ENCODE measurements at regions of chr1 and their contacts with region 1.

Region 1: GRCh38 chr1:248837794-248838356 is at the start of gene ZNF672:
- DNase-seq: peak; percentile 96
- H3K4me3 ChIP-seq: peak within 1 kb of the TSS; percentile 86
- H3K27ac ChIP-seq: peak within 1 kb of the TSS; percentile 74
- H3K4me1 ChIP-seq: peaks cover 24% of the 10 kb centered on the region
- CTCF ChIP-seq: no peak
- total RNA-seq, gene ZNF672: 45.7 and 56.1 TPM in 2 replicates

Region 2: GRCh38 chr1:248114890-248115289 is 723.0 kb before region 1 on chr1:
- CTCF ChIA-PET with region 1: no interaction called
- POLR2A ChIA-PET with region 1: no interaction called
- intact Hi-C with region 1: no loop called
- DNase-seq: no peak
- H3K4me3 ChIP-seq: no peak overlapping the region
- H3K27ac ChIP-seq: no peak overlapping the region
- H3K4me1 ChIP-seq: no peaks in the 10 kb centered on the region
- CTCF ChIP-seq: no peak

Region 3: GRCh38 chr1:248622570-248623001 is 215.3 kb before region 1 on chr1:
- CTCF ChIA-PET with region 1: no interaction called
- POLR2A ChIA-PET with region 1: no interaction called
- intact Hi-C with region 1: loop called (anchors 1 kb)
- DNase-seq: peak; percentile 62
- H3K4me3 ChIP-seq: no peak overlapping the region
- H3K27ac ChIP-seq: no peak overlapping the region
- H3K4me1 ChIP-seq: no peaks in the 10 kb centered on the region
- CTCF ChIP-seq: peak; percentile 83

Region 4: GRCh38 chr1:248739572-248740205 is 98.2 kb before region 1 on chr1:
- CTCF ChIA-PET with region 1: no interaction called
- POLR2A ChIA-PET with region 1: no interaction called
- intact Hi-C with region 1: no loop called
- DNase-seq: peak; percentile 29
- H3K4me3 ChIP-seq: no peak overlapping the region
- H3K27ac ChIP-seq: no peak overlapping the region
- H3K4me1 ChIP-seq: no peaks in the 10 kb centered on the region
- CTCF ChIP-seq: no peak

Region 5: DNA sequence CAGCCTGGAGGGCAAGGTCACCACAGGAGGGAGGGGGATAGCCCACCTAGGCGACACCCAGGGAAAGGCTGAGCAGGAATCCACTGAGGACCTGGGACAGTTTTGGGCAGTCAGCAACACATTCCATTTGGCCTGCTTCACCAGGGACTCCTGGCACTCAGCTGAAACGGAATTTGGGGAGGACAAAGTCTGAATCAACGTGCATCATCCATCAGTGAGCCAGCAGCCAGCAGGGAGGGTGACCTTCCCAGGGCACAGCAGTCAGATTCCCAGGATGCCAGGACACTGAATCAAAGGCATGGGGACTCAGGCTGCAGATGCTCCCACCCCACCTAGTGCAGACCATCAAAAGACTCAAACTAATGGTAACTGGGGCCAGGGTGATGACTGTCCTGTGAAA is 16.8 kb before region 1 on chr1:
- CTCF ChIA-PET with region 1: interaction called, 11 read pairs
- POLR2A ChIA-PET with region 1: interaction called, 70 read pairs
- intact Hi-C with region 1: loop called (anchors 1 kb)
- DNase-seq: no peak
- H3K4me3 ChIP-seq: no peak overlapping the region
- H3K27ac ChIP-seq: no peak overlapping the region
- H3K4me1 ChIP-seq: peaks cover 43% of the 10 kb centered on the region
- CTCF ChIP-seq: no peak

Region 6: GRCh38 chr1:248825909-248826760 is 11.7 kb before region 1 on chr1 and contains the start of gene SH3BP5L:
- CTCF ChIA-PET with region 1: interaction called, 11 read pairs
- POLR2A ChIA-PET with region 1: interaction called, 70 read pairs
- intact Hi-C with region 1: loop called (anchors 1 kb)
- DNase-seq: peak; percentile 95
- H3K4me3 ChIP-seq: peak within 1 kb of the TSS; percentile 73
- H3K27ac ChIP-seq: peak within 1 kb of the TSS; percentile 78
- H3K4me1 ChIP-seq: peaks cover 40% of the 10 kb centered on the region
- CTCF ChIP-seq: peak; percentile 95
- total RNA-seq, gene SH3BP5L: 14.5 and 16.9 TPM in 2 replicates

Region 7: GRCh38 chr1:248858891-248859889 is 21.3 kb after region 1 on chr1 and contains the start of gene ZNF692:
- CTCF ChIA-PET with region 1: interaction called, 8 read pairs
- POLR2A ChIA-PET with region 1: interaction called, 24 read pairs
- intact Hi-C with region 1: loop called (anchors 1 kb)
- DNase-seq: peak; percentile 99
- H3K4me3 ChIP-seq: peak within 1 kb of the TSS; percentile 79
- H3K27ac ChIP-seq: peak within 1 kb of the TSS; percentile 72
- H3K4me1 ChIP-seq: peaks cover 39% of the 10 kb centered on the region
- CTCF ChIP-seq: no peak
- total RNA-seq, gene ZNF692: 49.7 and 65.0 TPM in 2 replicates

Region 8: GRCh38 chr1:248873409-248873992 is 35.6 kb after region 1 on chr1:
- CTCF ChIA-PET with region 1: no interaction called
- POLR2A ChIA-PET with region 1: interaction called, 8 read pairs
- intact Hi-C with region 1: loop called (anchors 1 kb)
- DNase-seq: peak; percentile 95
- H3K4me3 ChIP-seq: peak overlapping the region; percentile 81
- H3K27ac ChIP-seq: peak overlapping the region; percentile 83
- H3K4me1 ChIP-seq: peaks cover 12% of the 10 kb centered on the region
- CTCF ChIP-seq: no peak

Region 9: DNA sequence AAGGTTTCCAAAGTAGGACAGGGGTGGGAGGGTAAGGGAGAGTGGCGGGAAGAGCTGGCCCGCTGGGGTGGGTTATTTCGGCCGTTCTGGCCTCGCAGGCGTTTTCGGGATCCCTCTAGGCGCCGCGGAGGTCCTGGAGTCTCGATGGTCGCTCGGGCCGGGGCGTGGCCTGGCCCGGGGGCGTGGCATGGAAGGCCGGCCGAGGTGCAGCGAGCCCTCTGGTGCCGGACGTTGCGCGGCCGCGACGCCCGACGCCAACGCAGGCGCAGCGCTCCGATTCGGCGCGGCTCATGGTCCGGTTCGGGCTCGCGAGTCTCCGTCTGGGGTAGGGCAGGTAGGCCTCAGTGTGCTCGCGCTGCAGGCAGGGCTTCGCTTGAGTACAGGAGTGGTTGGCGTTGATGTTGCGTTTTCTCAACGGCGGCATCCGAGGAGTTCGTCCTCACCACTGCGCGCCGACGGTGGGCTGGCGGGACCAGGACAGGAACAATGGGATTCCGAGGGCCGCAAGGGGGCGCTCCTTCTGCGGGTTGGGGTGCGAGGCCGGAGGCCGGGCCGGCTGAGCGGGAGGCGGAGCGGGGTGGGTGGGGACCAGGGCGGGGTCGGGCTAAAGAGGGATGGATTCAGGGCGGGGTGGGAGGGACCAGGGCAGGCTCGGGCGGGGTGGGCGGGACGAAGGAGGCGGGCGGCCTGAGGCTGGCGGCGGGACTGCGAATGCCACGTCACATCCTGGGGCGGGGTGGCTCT is 68.3 kb after region 1 on chr1 and contains the start of gene PGBD2:
- CTCF ChIA-PET with region 1: no interaction called
- POLR2A ChIA-PET with region 1: interaction called, 11 read pairs
- intact Hi-C with region 1: loop called (anchors 1 kb)
- DNase-seq: peak; percentile 95
- H3K4me3 ChIP-seq: peak within 1 kb of the TSS; percentile 72
- H3K27ac ChIP-seq: peak within 1 kb of the TSS; percentile 68
- H3K4me1 ChIP-seq: peaks cover 16% of the 10 kb centered on the region
- CTCF ChIP-seq: peak; percentile 74
- total RNA-seq, gene PGBD2: 9.2 and 13.0 TPM in 2 replicates